ENCODE measurements at regions of chr11 and their contacts with region 1.

Region 1: GRCh38 chr11:122781378-122782195 is 56.7 kb upstream of the CRTAM start:
- DNase-seq: peak; percentile 90
- H3K4me3 ChIP-seq: no peak overlapping the region
- H3K27ac ChIP-seq: no peak overlapping the region
- H3K4me1 ChIP-seq: peaks cover 33% of the 10 kb centered on the region
- H3K27me3 ChIP-seq: no peaks in the 10 kb centered on the region
- CTCF ChIP-seq: peak; percentile 92 to 94
- POLR2A ChIP-seq: no peak

Region 2: GRCh38 chr11:122578168-122578825 is 203.3 kb before region 1 on chr11:
- CTCF ChIA-PET with region 1: interaction called, 4 read pairs
- POLR2A ChIA-PET with region 1: no interaction called
- dilution Hi-C with region 1: no loop called
- intact Hi-C with region 1: loop called (anchors 1 kb)
- DNase-seq: no peak
- H3K4me3 ChIP-seq: no peak overlapping the region
- H3K27ac ChIP-seq: no peak overlapping the region
- H3K4me1 ChIP-seq: no peaks in the 10 kb centered on the region
- H3K27me3 ChIP-seq: no peaks in the 10 kb centered on the region
- CTCF ChIP-seq: no peak
- POLR2A ChIP-seq: no peak

Region 3: DNA sequence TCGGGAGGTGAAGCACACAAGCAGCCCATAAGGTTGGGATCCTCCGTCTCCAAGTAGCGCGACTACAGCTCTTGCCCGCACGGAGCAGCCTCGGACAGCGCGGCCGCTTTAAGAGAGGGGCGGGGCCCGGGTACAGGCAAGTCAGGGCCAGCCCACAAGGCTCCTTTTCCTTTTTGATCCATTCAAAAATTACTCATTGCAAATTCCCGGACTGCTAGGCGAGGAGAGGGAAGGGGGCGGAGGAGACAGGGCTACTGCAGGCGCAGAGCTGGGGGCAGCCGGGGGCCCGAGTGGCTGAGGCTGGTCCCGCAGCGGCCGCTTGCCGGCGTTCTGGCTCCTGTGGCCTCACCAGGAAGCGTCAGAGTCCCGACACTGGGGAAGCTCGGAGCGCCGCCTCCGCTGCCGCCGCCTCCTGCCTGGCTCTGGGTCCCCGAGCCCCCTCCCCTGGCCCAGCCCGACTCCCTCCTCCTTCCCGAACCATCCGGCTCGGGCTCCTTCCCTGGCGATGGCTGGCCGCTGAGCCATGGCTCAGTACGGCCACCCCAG is 126.0 kb before region 1 on chr11 and contains the start of gene UBASH3B:
- CTCF ChIA-PET with region 1: interaction called, 59 read pairs
- POLR2A ChIA-PET with region 1: interaction called, 4 read pairs
- dilution Hi-C with region 1: no loop called
- intact Hi-C with region 1: loop called (anchors 1 kb)
- DNase-seq: peak; percentile 90
- H3K4me3 ChIP-seq: peak within 1 kb of the TSS; percentile 47 to 74 (median 62)
- H3K27ac ChIP-seq: peak within 1 kb of the TSS; percentile 83
- H3K4me1 ChIP-seq: peaks cover 17% of the 10 kb centered on the region
- H3K27me3 ChIP-seq: no peaks in the 10 kb centered on the region
- CTCF ChIP-seq: no peak
- POLR2A ChIP-seq: peak; percentile 96
- total RNA-seq, gene UBASH3B: 38.1 and 38.8 TPM in 2 replicates

Region 4: GRCh38 chr11:122697636-122698167 is 83.9 kb before region 1 on chr11:
- CTCF ChIA-PET with region 1: interaction called, 10 read pairs
- POLR2A ChIA-PET with region 1: no interaction called
- dilution Hi-C with region 1: no loop called
- intact Hi-C with region 1: no loop called
- DNase-seq: no peak
- H3K4me3 ChIP-seq: no peak overlapping the region
- H3K27ac ChIP-seq: no peak overlapping the region
- H3K4me1 ChIP-seq: peaks cover 7% of the 10 kb centered on the region
- H3K27me3 ChIP-seq: no peaks in the 10 kb centered on the region
- CTCF ChIP-seq: no peak
- POLR2A ChIP-seq: no peak

Region 5: GRCh38 chr11:122733318-122733717 is 48.3 kb before region 1 on chr11:
- CTCF ChIA-PET with region 1: interaction called, 10 read pairs
- POLR2A ChIA-PET with region 1: no interaction called
- dilution Hi-C with region 1: no loop called
- intact Hi-C with region 1: loop called (anchors 5 kb)
- DNase-seq: peak; percentile 99
- H3K4me3 ChIP-seq: no peak overlapping the region
- H3K27ac ChIP-seq: peak overlapping the region; percentile 69
- H3K4me1 ChIP-seq: peaks cover 59% of the 10 kb centered on the region
- H3K27me3 ChIP-seq: no peaks in the 10 kb centered on the region
- CTCF ChIP-seq: no peak
- POLR2A ChIP-seq: peak; percentile 20

Region 6: DNA sequence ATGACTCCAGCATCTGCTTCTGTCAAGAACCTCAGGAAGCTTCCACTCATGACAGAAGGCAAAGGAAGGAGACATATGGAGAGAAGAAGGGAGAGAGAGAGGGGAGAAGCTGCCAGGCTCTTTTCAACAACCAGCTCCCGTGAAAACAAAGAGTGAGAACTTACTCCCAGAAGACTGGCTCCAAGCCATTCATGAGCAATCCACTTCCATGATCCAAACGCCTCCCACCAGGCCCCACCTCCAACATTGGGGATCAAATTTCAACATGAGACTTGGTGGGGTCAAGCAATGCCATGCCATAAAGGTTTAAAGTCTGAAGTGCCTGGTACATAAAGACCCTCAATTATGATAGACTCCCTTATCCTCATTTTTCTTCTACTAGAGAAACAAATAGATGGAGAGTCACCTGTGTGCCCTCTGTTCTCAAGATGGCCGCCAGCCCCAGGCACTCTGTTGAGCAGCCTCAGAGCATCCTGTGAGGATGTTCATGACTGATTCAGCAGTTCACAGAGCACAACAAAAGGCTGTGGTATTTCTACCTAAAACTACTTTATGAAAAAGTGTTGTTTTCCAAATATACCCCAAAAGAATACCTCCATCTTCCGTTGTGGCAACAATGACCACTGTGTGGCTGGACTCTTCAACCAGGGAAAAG is 12.3 kb before region 1 on chr11:
- CTCF ChIA-PET with region 1: interaction called, 30 read pairs
- POLR2A ChIA-PET with region 1: no interaction called
- dilution Hi-C with region 1: no loop called
- intact Hi-C with region 1: no loop called
- DNase-seq: no peak
- H3K4me3 ChIP-seq: no peak overlapping the region
- H3K27ac ChIP-seq: no peak overlapping the region
- H3K4me1 ChIP-seq: peaks cover 19% of the 10 kb centered on the region
- H3K27me3 ChIP-seq: no peaks in the 10 kb centered on the region
- CTCF ChIP-seq: no peak
- POLR2A ChIP-seq: no peak

Region 7: GRCh38 chr11:122853971-122854446 is 72.4 kb after region 1 on chr11:
- CTCF ChIA-PET with region 1: interaction called, 60 read pairs
- POLR2A ChIA-PET with region 1: no interaction called
- dilution Hi-C with region 1: no loop called
- intact Hi-C with region 1: loop called (anchors 1 kb)
- DNase-seq: peak; percentile 78
- H3K4me3 ChIP-seq: no peak overlapping the region
- H3K27ac ChIP-seq: no peak overlapping the region
- H3K4me1 ChIP-seq: no peaks in the 10 kb centered on the region
- H3K27me3 ChIP-seq: peaks cover 0 to 3% of the 10 kb centered on the region in 2 experiments
- CTCF ChIP-seq: peak; percentile 47 to 63
- POLR2A ChIP-seq: no peak